Prostate gland (tissue), 2 donors: ENCODE measurements at regions of chr5 and their contacts with region 1.

Region 1: GRCh38 chr5:169583424-169584204 is at the start of gene SPDL1:
- DNase-seq: peak; percentile 95
- H3K4me3 ChIP-seq: peak within 1 kb of the TSS; percentile 56 to 81
- H3K27ac ChIP-seq: peak within 1 kb of the TSS; percentile 50 to 67
- H3K4me1 ChIP-seq: no peaks in the 10 kb centered on the region
- H3K27me3 ChIP-seq: no peaks in the 10 kb centered on the region
- CTCF ChIP-seq: peak in 2 of 4 experiments; percentile 2 to 12
- POLR2A ChIP-seq: peak; percentile 75
- total RNA-seq, gene SPDL1: 9.0 to 12.6 TPM

Region 2: DNA sequence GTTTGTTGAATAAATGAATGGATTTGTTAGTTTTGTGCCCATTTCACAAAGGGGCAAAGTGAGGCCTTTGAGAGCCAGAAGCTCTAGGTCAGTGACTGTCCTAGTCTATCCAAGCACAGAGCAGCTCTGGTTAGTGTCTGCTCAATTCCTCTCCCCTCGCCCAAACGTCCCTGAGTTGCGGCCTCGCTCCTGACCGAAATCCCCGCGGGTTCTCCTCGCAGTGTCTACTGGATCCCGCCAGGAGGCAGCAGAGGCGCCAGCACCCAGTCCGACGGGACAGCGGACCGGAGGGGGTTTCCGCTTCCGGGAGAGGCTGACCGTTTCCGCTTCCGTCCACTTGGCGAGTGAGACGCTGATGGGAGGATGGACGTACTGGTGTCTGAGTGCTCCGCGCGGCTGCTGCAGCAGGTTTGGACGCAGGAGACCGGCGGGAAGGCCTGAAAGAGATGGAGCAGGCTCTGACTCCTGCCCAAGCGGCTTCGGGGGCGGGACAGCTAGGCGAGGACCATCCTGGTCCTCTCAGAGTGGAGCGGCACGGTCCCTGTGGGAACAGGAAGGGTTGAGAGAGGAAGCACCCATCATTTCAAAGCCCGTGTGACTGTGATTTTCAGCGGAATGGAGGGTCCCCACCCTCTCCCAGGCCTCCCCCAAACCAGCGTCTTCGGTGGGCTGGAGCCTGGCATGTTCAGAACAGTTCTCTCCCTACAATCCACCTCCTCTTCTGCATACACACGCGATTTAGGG is 1097.3 kb before region 1 on chr5 and contains the start of gene RARS1:
- intact Hi-C with region 1: loop called (anchors 10 kb)
- DNase-seq: peak; percentile 90
- H3K4me3 ChIP-seq: peak within 1 kb of the TSS; percentile 67 to 76
- H3K27ac ChIP-seq: peak within 1 kb of the TSS; percentile 64 to 66
- H3K4me1 ChIP-seq: no peaks in the 10 kb centered on the region
- H3K27me3 ChIP-seq: no peaks in the 10 kb centered on the region
- CTCF ChIP-seq: peak; percentile 80 to 97 (median 95)
- POLR2A ChIP-seq: peak; percentile 59
- total RNA-seq, gene RARS1: 71.6 to 86.6 TPM

Region 3: DNA sequence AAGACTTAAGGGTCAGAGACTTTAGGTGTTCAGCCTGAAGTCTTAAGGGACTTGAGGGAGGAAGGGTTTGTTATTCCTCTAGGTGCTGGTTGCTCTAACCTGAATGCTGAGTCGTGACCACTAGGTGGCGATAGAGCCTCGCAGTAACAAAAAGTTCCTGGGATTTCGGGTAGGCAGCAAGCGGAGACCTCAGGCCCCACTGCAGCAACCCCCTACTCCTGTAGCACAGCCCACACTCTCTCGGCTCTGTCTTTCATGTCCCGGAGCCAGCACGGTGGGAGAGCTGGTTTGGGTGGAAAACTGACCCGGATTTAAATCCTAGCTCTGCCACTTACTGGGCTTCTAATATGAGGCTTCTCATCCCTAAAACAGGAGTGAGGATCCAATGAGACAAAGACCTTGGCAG is 904.1 kb before region 1 on chr5:
- intact Hi-C with region 1: loop called (anchors 5 kb)
- DNase-seq: peak; percentile 72
- H3K4me3 ChIP-seq: no peak overlapping the region
- H3K27ac ChIP-seq: no peak overlapping the region
- H3K4me1 ChIP-seq: no peaks in the 10 kb centered on the region
- H3K27me3 ChIP-seq: no peaks in the 10 kb centered on the region
- CTCF ChIP-seq: peak; percentile 68 to 91 (median 80)
- POLR2A ChIP-seq: no peak

Region 4: DNA sequence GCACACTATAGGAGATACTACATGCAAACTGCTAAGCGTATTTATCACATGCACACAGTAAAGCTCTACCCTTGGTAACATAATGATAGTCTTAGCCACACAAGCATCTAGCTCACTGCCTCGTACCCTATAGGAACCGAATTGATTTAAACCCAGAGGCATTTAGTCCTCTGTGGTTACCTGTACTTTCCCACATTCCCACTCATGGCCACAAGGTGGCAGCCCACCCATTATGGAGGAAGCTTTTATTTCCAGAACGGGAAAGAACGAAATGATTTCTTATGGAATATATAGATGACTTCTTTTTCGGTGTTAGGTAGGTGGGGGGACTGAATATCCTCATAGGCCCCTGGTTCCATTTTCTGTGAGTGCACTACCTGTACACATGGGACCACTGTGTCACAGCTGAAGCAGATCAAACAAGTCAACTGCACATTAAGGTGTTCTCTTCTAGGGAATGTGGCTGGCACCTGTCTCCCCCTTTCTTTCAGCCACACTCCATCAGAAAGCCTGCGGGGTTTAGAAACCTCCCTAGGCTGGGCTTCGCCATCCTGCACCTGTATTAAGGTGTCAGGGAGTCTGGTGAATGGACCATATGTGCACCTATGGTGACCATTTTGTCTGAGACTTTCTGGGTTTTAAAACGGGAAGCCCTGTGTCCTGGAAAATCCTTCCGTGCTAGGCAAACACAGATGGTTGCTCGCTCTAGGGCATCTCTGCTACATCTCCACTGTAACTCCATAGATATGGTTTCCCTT is 595.9 kb before region 1 on chr5:
- intact Hi-C with region 1: loop called (anchors 5 kb)
- DNase-seq: peak; percentile 76
- H3K4me3 ChIP-seq: no peak overlapping the region
- H3K27ac ChIP-seq: no peak overlapping the region
- H3K4me1 ChIP-seq: no peaks in the 10 kb centered on the region
- H3K27me3 ChIP-seq: no peaks in the 10 kb centered on the region
- CTCF ChIP-seq: peak; percentile 83 to 95 (median 88)
- POLR2A ChIP-seq: no peak